Activated naive CD4-positive, alpha-beta T cell treated with anti-CD3 and anti-CD28 coated beads, Interleukin-2, amount 10 ng/mL, durations not matched to agents 7 days and 5 days (primary cell): ENCODE measurements at regions of chr11 and their contacts with region 1.

Region 1: DNA sequence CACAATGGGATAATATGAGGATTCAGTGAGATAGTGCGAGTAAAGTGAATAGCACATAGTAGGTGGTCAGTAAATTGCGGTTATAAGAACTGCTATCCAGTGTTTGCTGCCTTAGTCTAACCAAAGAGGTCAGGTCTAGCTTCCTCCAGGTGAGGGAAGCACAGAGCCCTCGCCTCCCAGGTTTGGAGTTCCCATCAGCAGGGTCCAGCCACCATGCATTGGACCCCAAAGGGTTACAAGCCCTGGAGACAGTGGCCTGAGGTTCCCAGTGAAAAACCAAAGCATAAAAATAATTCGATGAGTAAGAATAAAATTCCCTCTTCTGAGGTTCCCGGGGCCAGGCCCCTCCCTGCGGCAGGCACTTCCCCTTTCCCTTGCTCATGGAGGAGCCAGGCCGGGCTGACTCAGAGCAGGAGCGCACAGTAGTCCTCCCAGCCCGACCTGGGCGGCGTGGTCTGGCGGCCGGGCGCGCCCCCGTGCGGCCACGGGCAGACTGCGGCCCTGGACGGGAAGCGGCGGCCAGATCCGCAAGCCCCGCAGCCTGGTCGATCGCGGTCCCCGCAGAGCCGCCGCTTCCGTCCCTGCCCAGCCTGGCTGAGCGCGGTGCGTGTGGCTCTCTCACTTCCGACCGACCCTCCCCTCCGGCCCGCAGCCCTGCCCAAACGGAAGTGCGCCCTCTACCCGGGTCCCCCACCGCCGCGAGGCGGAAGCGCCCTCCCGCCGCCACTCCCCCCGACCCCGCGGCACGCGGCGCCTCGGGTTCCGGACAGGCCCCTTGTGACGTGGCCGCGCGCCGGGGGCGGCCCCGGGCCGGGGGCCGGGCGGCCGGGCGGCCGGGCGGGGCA is at the start of gene SLC39A13:
- DNase-seq: peak; percentile 92
- H3K4me3 Mint-ChIP-seq: peak within 1 kb of the TSS; percentile 92
- H3K27ac Mint-ChIP-seq: peak within 1 kb of the TSS; percentile 90
- H3K4me1 Mint-ChIP-seq: peaks cover 30% of the 10 kb centered on the region
- H3K27me3 Mint-ChIP-seq: peaks cover 8% of the 10 kb centered on the region

Region 2: DNA sequence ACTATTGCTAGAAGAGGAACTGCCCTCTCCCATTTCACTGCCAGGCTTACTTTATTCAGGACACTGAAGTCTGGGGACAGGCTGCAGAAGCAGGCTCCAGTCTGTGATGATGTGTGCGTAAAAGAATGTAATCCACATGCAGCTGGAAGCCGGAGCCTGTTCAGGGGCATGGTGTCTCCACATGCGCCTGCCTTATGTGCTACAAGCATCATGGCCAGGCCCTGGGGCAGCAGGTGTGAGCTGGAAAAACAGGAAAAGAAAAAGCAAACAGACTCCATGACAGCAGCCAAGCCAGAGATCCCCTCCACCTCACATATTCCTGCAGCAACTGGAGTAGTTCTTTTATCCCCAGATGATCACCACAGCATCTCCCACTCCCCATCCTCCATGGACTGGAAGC is 264.6 kb before region 1 on chr11:
- CTCF ChIA-PET with region 1: no interaction called
- DNase-seq: no peak
- H3K4me3 Mint-ChIP-seq: no peak overlapping the region
- H3K27ac Mint-ChIP-seq: no peak overlapping the region
- H3K4me1 Mint-ChIP-seq: peaks cover 4% of the 10 kb centered on the region
- H3K27me3 Mint-ChIP-seq: no peaks in the 10 kb centered on the region

Region 3: GRCh38 chr11:47317064-47317828 is 90.7 kb before region 1 on chr11:
- CTCF ChIA-PET with region 1: interaction called, 10 read pairs
- DNase-seq: no peak
- H3K4me3 Mint-ChIP-seq: no peak overlapping the region
- H3K27ac Mint-ChIP-seq: peak overlapping the region; percentile 8
- H3K4me1 Mint-ChIP-seq: peaks cover 6% of the 10 kb centered on the region
- H3K27me3 Mint-ChIP-seq: no peaks in the 10 kb centered on the region

Region 4: DNA sequence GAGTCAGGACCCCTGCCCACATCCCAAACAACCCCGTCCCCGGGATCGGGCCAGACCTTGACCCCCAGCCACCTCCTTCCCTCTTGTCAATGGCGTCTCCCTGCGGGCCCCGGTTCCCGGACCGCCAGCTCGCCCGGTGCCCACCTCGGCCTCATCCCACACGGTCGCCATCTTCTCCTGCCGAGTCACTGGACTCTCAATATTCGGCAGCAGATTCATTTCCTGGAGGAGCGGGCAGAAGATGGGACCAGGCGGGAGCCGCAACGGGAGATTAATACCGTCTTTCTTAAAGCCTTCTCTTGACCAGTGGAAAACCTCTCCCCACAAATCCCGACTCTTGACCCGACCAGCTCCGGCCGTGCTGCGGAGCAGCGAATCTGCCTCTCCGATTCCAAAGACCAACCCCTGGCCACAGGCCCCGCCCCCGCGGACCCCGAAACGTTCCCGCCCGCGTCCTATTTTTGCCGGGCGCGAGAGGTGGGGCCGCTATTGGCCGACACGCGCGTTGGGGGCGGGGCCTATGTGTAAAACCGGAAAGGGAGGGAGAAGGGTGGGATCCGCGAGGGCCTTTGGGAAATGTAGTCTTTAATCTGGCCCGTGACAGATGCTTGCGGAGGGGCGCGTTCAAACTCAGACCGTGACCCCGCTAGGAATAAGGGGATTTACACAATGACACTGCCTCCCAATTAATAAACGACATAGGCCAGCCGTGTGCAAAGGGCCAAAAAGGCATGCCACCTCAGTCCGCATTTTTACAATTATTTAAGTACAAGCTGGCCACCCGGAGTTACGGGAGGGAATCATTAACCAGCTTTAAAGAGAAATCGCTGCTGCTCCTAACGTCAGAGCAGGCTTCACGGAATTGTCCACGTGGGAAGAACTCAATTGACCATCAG is 18.3 kb after region 1 on chr11 and contains the start of gene PSMC3:
- CTCF ChIA-PET with region 1: interaction called, 22 read pairs
- DNase-seq: peak; percentile 99
- H3K4me3 Mint-ChIP-seq: peak within 1 kb of the TSS; percentile 100
- H3K27ac Mint-ChIP-seq: peak within 1 kb of the TSS; percentile 99
- H3K4me1 Mint-ChIP-seq: peaks cover 35% of the 10 kb centered on the region
- H3K27me3 Mint-ChIP-seq: no peaks in the 10 kb centered on the region

Region 5: GRCh38 chr11:47454180-47454644 is 46.2 kb after region 1 on chr11:
- CTCF ChIA-PET with region 1: interaction called, 11 read pairs
- DNase-seq: peak; percentile 83
- H3K4me3 Mint-ChIP-seq: no peak overlapping the region
- H3K27ac Mint-ChIP-seq: no peak overlapping the region
- H3K4me1 Mint-ChIP-seq: peaks cover 3% of the 10 kb centered on the region
- H3K27me3 Mint-ChIP-seq: no peaks in the 10 kb centered on the region